Activated T-helper 1 cell treated with anti-CD3 and anti-CD28 coated beads, Interleukin-12 subunit alpha, Interleukin-12 subunit beta, Interleukin-2, Interleukin-4 antibody, amounts not matched to agents 30 ng/mL and 10 ng/mL and 1 ng/mL, durations not matched to agents 14 hours and 24 hours and 36 hours (primary cell): ENCODE measurements at regions of chrX and their contacts with region 1.

Region 1: DNA sequence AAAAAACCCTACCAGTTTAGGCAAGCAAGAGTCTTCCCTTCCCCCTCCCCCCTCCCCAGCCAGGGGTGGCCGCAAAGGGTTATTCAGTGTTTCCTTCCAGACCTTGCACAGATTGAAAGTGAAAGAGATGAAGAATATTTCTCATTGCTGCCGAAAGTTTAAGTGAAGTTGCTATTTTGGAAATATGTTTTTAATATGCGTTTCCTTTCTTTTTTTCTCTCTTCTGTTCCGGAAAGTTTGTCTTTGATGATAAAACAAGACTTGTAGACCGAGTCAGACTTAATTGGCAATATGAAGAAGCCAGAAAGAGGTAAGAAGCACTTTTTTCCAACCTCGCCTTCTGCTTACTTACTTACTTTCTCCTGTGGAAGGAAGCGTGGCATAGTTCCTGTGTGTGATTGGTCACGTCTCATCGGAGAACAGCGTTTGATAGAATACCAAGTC is 58.5 kb upstream of the CLCN4 start:
- DNase-seq: peak; percentile 53
- H3K4me3 Mint-ChIP-seq: peak overlapping the region; percentile 79
- H3K27ac Mint-ChIP-seq: peak overlapping the region; percentile 87
- H3K4me1 Mint-ChIP-seq: peaks cover 34% of the 10 kb centered on the region
- H3K27me3 Mint-ChIP-seq: no peaks in the 10 kb centered on the region

Region 2: GRCh38 chrX:10052906-10053625 is 45.2 kb before region 1 on chrX:
- intact Hi-C with region 1: no loop called
- DNase-seq: no peak
- H3K4me3 Mint-ChIP-seq: no peak overlapping the region
- H3K27ac Mint-ChIP-seq: no peak overlapping the region
- H3K4me1 Mint-ChIP-seq: peaks cover 24% of the 10 kb centered on the region
- H3K27me3 Mint-ChIP-seq: no peaks in the 10 kb centered on the region

Region 3: GRCh38 chrX:10111364-10112148 is 13.3 kb after region 1 on chrX:
- intact Hi-C with region 1: loop called (anchors 1 kb)
- DNase-seq: peak; percentile 14
- H3K4me3 Mint-ChIP-seq: peak overlapping the region; percentile 83
- H3K27ac Mint-ChIP-seq: peak overlapping the region; percentile 97
- H3K4me1 Mint-ChIP-seq: peaks cover 55% of the 10 kb centered on the region
- H3K27me3 Mint-ChIP-seq: no peaks in the 10 kb centered on the region